Spleen (tissue), 13 donors: ENCODE measurements at regions of chr18 and their contacts with region 1.

Region 1: GRCh38 chr18:42114310-42114943 is 159.4 kb downstream of the PIK3C3 start:
- DNase-seq: no peak
- H3K4me3 ChIP-seq: no peak overlapping the region
- H3K27ac ChIP-seq: no peak overlapping the region
- H3K4me1 ChIP-seq: peaks cover 3 to 17% (median 13%) of the 10 kb centered on the region in 6 donors
- H3K27me3 ChIP-seq: no peaks in the 10 kb centered on the region
- CTCF ChIP-seq: peak; percentile 34 to 76 (median 66)
- POLR2A ChIP-seq: no peak

Region 2: GRCh38 chr18:43265465-43265864 is 1151.0 kb after region 1 on chr18:
- intact Hi-C with region 1: loop called (anchors 5 kb)
- DNase-seq: peak; percentile 37
- H3K4me3 ChIP-seq: no peak overlapping the region
- H3K27ac ChIP-seq: no peak overlapping the region
- H3K4me1 ChIP-seq: no peaks in the 10 kb centered on the region
- H3K27me3 ChIP-seq: no peaks in the 10 kb centered on the region
- CTCF ChIP-seq: no peak
- POLR2A ChIP-seq: no peak

Region 3: GRCh38 chr18:43587538-43588153 is 1473.2 kb after region 1 on chr18:
- intact Hi-C with region 1: loop called (anchors 10 kb)
- DNase-seq: no peak
- H3K4me3 ChIP-seq: no peak overlapping the region
- H3K27ac ChIP-seq: no peak overlapping the region
- H3K4me1 ChIP-seq: no peaks in the 10 kb centered on the region
- H3K27me3 ChIP-seq: no peaks in the 10 kb centered on the region
- CTCF ChIP-seq: peak in 9 of 11 experiments; percentile 42 to 68 (median 60)
- POLR2A ChIP-seq: no peak